Dorsolateral prefrontal cortex (tissue), 120 donors: ENCODE measurements at regions of chr10 and their contacts with region 1.

Region 1: GRCh38 chr10:79310911-79311573 is 36.2 kb upstream of the PPIF start:
- DNase-seq: peak in 5 of 10 donors; percentile 42 to 78 (median 66)
- H3K4me3 ChIP-seq: peak overlapping the region in 51 of 59 donors; percentile 3 to 52 (median 30)
- H3K27ac ChIP-seq: peak overlapping the region; percentile 20 to 92 (median 86)
- H3K27me3 ChIP-seq: no peaks in the 10 kb centered on the region
- CTCF ChIP-seq: no peak

Region 2: GRCh38 chr10:79274279-79275104 is 36.5 kb before region 1 on chr10:
- intact Hi-C with region 1: no loop called
- DNase-seq: peak; percentile 71 to 97 (median 95)
- H3K4me3 ChIP-seq: peak overlapping the region in 31 of 59 donors; percentile 3 to 44 (median 24)
- H3K27ac ChIP-seq: peak overlapping the region; percentile 78 to 98 (median 92)
- H3K27me3 ChIP-seq: no peaks in the 10 kb centered on the region
- CTCF ChIP-seq: peak in 43 of 56 donors; percentile 9 to 61 (median 36)

Region 3: DNA sequence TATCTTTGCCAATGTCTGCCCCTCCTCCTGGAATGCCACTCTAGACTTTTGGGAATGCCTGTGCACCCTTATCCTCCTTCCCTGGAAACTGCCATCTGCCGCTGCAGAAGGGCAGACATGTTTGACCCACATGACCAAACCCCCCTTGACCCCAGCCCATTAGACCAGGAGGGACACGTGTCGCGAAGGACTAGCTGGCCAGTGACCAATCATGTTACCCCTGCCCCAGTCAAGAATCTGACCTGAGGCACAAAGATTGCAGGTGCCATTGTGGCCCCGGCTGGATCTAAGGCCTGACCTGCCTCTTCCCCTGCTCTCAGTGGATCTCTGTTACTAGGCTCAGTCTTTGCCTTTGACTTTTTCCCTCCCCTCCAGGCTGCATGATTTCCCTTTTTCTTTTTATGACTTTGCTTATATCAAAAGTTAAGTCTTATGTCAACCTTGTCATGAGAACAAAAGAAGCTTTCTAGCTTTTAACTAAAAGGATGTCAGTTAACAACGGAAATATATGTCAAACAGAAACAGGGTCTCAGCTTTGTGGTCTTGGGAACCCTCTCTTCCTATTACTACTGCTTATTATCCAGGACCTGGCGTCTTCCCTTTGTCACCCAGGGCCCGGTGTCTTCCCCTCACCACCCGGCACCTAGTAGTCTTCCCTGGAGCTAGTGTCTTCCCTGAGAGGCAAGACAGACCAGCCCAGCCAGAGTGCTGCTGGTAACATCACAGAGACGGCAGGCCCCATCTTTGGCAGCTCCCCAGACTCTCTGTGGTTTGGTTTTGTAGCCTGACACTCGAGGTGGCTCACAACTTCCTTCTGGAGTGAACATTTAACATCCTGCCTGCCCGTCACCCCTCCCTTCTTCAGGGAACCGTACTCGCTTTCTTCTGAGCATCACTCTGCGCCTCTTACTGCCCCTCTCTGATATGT is 11.8 kb after region 1 on chr10:
- intact Hi-C with region 1: loop called in 1 of 2 experiments (anchors 1 kb)
- DNase-seq: peak in 1 of 10 donors; percentile 40
- H3K4me3 ChIP-seq: no peak overlapping the region
- H3K27ac ChIP-seq: peak overlapping the region in 1 of 59 donors; percentile 4
- H3K27me3 ChIP-seq: no peaks in the 10 kb centered on the region
- CTCF ChIP-seq: no peak